ENCODE measurements at regions of chr16 and their contacts with region 1.

Region 1: GRCh38 chr16:751152-752006 is 9.2 kb upstream of the MSLN start:
- DNase-seq: no peak
- ATAC-seq: no peak
- H3K4me3 Mint-ChIP-seq: no peak overlapping the region
- H3K27ac Mint-ChIP-seq: no peak overlapping the region
- H3K4me1 Mint-ChIP-seq: peaks cover 2% of the 10 kb centered on the region
- H3K27me3 Mint-ChIP-seq: peaks cover 2% of the 10 kb centered on the region

Region 2: DNA sequence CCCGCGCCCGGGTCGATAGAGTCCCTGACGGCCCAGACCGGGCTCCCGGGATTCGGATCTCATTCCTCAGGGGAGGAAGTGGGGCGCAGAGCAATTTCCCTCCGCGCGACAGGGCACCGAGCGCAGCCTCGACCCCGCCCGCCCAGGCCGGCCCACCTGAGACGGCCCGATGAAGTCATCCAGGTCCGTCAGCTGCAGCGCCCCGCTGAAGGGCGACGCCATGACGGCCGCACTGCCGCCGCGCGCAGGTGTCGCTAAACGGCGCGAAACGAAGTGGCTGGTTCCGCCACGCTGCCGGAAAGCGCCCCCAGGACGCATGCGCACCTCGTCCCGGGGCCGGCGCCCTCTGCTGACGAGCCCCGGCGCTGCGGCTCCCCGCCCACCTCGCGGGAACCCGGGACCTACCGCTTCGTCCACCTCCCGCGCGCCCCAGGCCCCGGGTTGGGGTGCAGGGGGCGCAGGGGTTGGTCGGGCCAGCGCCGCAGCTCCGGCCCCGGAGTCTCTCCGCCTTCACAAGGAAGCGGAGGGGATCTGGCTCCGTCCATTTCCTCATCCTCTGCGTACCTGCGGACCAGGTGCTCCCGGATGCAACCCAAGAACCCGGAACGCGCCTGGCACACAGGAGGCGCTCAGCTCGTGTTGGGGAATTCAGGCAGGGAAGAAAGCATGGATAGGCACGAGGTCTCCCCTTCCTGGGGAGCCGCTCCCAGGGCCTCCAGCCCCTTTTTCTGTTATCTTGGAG is 10.4 kb before region 1 on chr16 and contains the start of gene CIAO3:
- CTCF ChIA-PET with region 1: interaction called, 15 read pairs
- POLR2A ChIA-PET with region 1: no interaction called
- DNase-seq: peak; percentile 93
- ATAC-seq: peak; percentile 95
- H3K4me3 Mint-ChIP-seq: peak within 1 kb of the TSS; percentile 85
- H3K27ac Mint-ChIP-seq: peak within 1 kb of the TSS; percentile 71
- H3K4me1 Mint-ChIP-seq: peaks cover 29% of the 10 kb centered on the region
- H3K27me3 Mint-ChIP-seq: no peaks in the 10 kb centered on the region
- total RNA-seq, gene CIAO3: 24.9 to 32.4 TPM